ENCODE measurements at regions of chr4 and their contacts with region 1.

Region 1: DNA sequence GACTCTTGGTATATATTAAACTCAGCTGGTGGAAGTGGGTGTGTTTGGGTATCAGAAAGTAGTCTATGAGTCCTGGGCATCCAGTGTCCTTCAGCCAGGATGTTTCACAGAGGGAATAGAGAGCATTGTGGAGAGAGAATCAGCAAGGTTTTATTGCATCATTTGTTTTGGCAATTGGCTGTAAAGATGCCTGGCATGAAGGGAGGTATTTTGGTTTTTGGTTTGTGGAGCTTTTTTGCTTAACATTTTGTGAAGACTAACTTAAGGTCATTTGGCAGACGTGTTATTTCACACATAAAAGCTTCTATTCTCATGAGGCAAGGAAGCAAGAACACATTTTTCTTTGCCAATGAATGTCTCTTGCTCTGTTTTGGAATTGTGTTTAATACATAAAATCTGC is 71.1 kb downstream of the DCLK2 start:
- DNase-seq: no peak
- H3K4me3 Mint-ChIP-seq: no peak overlapping the region
- H3K27ac Mint-ChIP-seq: no peak overlapping the region
- H3K4me1 Mint-ChIP-seq: no peaks in the 10 kb centered on the region
- H3K27me3 Mint-ChIP-seq: no peaks in the 10 kb centered on the region
- CTCF ChIP-seq: no peak

Region 2: DNA sequence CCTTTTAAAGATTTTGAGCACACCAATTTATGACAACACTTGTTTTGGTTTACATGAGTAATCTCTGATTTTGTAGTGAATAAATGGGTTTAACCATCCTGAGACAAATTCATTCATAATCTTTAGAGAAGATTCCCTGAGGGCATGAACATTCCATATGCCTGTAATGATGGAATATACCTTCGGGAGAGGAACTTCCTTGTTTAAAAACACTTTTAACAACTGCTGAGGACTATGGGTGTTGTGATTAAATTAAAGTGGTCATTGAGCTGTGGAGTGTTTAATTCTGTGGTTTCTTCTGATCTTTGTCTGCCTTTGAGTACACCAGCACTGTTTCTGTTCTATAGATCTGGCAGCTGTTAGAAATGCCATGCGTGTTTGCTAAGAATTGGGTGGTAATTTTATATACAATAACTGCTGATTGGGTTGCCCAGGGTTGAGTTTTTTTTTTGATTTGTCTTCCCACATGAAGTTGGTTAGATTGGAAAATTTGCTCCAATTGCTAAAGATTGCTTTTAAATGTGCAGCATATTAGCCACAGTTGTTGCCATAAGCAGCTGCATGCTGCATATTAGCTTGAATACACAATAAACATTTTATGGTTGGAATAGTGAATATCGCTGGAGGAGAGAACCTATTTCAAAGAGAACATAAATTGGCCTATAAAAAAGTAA is 15.7 kb after region 1 on chr4:
- CTCF ChIA-PET with region 1: interaction called, 4 read pairs
- POLR2A ChIA-PET with region 1: interaction called, 3 read pairs
- intact Hi-C with region 1: loop called (anchors 1 kb)
- DNase-seq: no peak
- H3K4me3 Mint-ChIP-seq: no peak overlapping the region
- H3K27ac Mint-ChIP-seq: no peak overlapping the region
- H3K4me1 Mint-ChIP-seq: peaks cover 4% of the 10 kb centered on the region
- H3K27me3 Mint-ChIP-seq: no peaks in the 10 kb centered on the region
- CTCF ChIP-seq: no peak

Measured in MCF 10A (cell line).